HCT116 (cell line): ENCODE measurements at regions of chr3 and their contacts with region 1.

Region 1: DNA sequence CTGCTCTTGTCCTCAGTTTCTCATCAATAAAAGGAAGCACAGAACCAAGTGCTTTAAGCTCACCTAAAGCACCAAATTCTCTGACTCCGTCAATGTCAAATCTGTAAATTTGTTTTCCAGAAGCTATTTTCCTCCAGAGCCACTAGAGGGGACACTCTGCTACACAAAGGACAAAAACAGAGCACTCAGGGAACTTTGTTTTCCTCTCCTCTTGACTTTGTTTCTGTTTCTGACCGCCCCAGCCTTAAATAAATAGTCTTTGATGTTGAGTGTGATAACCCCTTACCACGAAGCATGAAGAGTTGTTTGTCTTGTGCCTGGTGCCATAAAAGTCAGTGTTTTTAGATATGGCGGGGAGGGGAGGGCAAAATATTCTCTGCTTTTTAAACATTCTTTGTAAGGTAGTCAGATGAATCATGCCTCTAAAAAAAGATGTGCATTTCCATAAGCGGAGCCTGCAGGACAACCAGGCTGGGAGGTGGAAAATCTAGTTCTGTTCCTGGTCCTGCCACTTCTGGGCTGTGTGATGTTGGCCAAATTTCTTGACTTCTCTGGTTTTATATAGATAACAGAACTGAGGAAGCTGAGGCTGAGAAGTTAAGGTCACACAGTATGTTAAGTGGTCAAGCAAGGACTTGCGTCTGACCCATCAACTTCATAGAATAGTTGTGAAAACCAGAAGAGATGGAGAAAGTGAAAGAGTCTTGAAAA is 7.3 kb upstream of the ZBTB38 start:
- DNase-seq: peak; percentile 59
- ATAC-seq: peak; percentile 89
- H3K4me3 ChIP-seq: peak overlapping the region; percentile 20 to 41; a peak in 2 of 4 replicates
- H3K27ac ChIP-seq: no peak overlapping the region
- H3K4me1 ChIP-seq: peaks cover 7 to 20% of the 10 kb centered on the region in 2 experiments
- H3K27me3 ChIP-seq: no peaks in the 10 kb centered on the region
- CTCF ChIP-seq: peak; percentile 80 to 95 (median 81)
- POLR2A ChIP-seq: no peak
- RAD21 ChIP-seq: peak; percentile 94

Region 2: GRCh38 chr3:141421639-141422330 is 60.7 kb after region 1 on chr3:
- CTCF ChIA-PET with region 1: no interaction called
- POLR2A ChIA-PET with region 1: no interaction called
- RAD21 ChIA-PET with region 1: no interaction called
- intact Hi-C with region 1: no loop called
- DNase-seq: no peak
- ATAC-seq: no peak
- H3K4me3 ChIP-seq: no peak overlapping the region
- H3K27ac ChIP-seq: no peak overlapping the region
- H3K4me1 ChIP-seq: no peaks in the 10 kb centered on the region
- H3K27me3 ChIP-seq: no peaks in the 10 kb centered on the region
- CTCF ChIP-seq: no peak
- POLR2A ChIP-seq: no peak
- RAD21 ChIP-seq: no peak

Region 3: DNA sequence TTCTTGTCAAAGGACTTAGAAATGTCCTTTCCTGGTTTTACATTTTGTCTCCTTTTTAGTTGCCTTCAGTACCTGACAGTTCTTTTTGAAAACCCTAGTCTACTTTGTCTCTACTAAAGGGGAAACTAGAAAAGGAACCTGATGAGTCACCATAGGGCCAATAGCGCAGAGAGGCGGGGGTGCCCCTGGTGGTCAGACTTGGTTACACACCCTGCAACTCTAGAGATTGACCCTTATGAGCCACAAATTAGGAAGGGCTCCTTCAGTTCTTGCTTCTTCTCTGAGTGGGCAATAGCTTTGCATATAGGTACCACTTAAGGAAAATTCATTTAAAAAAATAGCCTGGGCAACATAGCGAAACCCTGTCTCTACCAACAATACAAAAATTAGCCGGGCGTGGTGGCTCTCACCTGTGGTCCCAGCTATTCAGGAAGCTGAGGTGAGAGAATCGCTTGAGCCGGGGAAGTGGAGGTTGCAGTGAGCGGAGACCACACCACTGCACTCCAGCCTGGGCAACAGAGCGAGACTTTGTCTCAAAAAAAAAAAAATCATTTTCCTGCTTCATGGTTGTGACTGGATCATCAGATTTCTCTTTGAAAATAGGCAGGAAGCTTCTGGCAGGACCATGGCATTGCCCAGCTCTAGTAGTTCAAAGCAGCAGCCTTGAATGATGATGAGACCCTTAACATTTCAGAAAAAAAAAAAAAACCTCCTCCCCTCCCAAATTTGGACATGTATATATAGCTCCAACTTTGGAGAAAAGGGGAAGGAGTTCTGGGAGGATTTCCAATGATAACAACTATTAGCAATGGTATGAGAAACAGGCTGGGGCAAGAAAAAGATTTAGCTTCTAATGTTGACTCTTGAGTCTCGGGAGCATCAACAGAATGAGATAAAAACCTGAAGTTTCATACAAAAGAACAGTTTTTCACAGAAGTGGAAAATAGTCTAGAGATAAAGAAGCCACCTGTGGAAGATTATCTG is 80.6 kb after region 1 on chr3:
- CTCF ChIA-PET with region 1: interaction called, 10 read pairs
- POLR2A ChIA-PET with region 1: no interaction called
- RAD21 ChIA-PET with region 1: no interaction called
- intact Hi-C with region 1: loop called (anchors 2 kb)
- DNase-seq: no peak
- ATAC-seq: peak; percentile 98
- H3K4me3 ChIP-seq: no peak overlapping the region
- H3K27ac ChIP-seq: no peak overlapping the region
- H3K4me1 ChIP-seq: peaks cover 0 to 4% of the 10 kb centered on the region in 2 experiments; a peak in 1 of 4 replicates
- H3K27me3 ChIP-seq: no peaks in the 10 kb centered on the region
- CTCF ChIP-seq: peak; percentile 74 to 96 (median 94)
- POLR2A ChIP-seq: no peak
- RAD21 ChIP-seq: peak; percentile 74